Activated CD8-positive, alpha-beta memory T cell treated with anti-CD3 and anti-CD28 coated beads, Interleukin-2, amount 10 ng/mL, durations not matched to agents 7 days and 5 days (primary cell): ENCODE measurements at regions of chr12 and their contacts with region 1.

Region 1: DNA sequence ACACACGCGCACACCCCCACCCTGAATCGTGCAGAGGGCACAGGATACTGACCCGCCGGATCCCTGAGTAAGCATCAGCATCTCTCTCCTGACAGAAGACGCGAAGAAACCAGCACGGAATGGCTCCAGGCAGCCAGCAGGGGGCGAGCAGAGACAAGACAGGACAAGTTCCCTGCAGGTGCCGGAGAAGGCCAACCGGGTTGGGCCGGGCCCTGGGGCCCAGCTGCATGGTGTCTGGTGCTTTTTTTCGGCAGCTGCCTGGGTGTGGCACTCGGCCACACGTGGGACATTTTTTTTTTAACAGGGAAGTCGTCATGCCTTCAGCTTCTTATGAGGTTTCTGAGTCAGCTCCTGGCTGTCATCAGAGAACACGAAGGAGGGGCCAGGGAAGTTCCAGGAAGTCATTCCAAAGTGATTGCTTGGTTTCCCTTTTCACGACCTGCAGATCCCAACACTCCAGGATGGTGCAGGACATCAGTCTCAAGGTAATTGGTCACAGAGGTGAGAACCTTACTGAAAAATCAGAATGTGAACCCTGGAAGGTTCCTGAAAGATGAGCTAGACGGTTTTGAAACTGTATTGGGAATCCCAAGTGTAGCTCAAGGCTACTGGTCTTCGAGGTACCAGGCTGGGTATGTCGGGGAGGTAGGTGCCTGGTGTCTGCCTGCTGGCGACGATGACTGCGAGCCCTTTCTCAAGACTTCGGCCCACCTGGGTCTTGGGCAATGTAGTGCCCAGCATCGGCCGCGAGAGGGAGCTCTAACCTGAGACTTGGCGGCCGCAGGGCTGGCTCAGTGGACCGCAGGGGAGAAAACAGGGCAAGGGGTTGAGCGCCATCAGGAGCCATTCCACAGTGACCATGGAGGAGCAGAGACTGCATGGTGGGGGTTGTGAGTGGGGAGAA is 190.8 kb upstream of the PRMT8 start:
- DNase-seq: peak; percentile 88
- ATAC-seq: peak; percentile 84
- H3K4me3 Mint-ChIP-seq: no peak overlapping the region
- H3K27ac Mint-ChIP-seq: peak overlapping the region; percentile 81
- H3K4me1 Mint-ChIP-seq: peaks cover 14% of the 10 kb centered on the region
- H3K27me3 Mint-ChIP-seq: peaks cover 10% of the 10 kb centered on the region

Region 2: GRCh38 chr12:3150931-3151835 is 149.0 kb before region 1 on chr12:
- CTCF ChIA-PET with region 1: no interaction called
- DNase-seq: no peak
- ATAC-seq: no peak
- H3K4me3 Mint-ChIP-seq: no peak overlapping the region
- H3K27ac Mint-ChIP-seq: no peak overlapping the region
- H3K4me1 Mint-ChIP-seq: peaks cover 4% of the 10 kb centered on the region
- H3K27me3 Mint-ChIP-seq: peaks cover 38% of the 10 kb centered on the region

Region 3: DNA sequence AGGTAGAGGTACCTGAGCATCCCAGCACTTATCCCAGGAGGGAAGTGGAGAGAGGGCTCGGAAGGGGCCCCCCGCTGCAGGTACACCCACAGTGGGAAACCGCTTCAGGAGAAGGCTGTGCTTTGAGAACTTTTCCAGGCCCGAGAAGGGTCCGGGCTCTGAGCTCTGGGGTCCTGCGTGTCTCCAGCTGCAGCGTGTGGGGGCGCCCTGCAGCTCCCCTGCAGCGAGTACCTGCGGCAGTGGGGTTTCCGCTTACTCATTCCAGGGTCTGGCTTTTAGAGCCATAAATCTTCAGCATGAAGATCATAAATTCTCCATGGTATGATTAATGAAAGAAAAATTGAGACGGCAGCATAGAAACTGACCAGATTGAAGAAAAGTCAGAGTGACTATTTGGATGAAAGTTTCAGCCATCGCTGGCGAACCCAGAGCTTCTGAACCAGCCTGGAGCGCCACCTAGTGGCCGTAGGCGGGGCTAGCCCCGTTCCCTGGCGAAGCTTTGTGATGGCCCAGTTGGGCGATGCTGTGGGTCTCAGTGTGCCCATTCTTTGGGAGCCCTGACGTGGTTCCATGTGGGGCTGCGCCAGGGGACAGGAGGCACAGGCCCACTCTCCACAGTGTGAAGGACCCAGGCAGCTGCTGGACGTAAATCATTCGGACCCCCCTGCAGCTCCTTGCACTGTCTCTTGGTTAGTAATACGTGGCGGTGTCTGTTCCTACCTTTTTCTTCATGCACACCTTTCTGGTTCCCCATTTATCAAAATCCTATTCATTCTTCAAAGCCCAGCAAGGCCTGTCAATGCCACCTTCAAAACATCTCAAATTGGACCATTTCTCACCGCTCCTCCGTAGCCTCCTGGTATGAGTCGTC is 24.8 kb before region 1 on chr12:
- CTCF ChIA-PET with region 1: interaction called, 28 read pairs
- DNase-seq: peak; percentile 74
- ATAC-seq: peak; percentile 87
- H3K4me3 Mint-ChIP-seq: no peak overlapping the region
- H3K27ac Mint-ChIP-seq: no peak overlapping the region
- H3K4me1 Mint-ChIP-seq: no peaks in the 10 kb centered on the region
- H3K27me3 Mint-ChIP-seq: peaks cover 18% of the 10 kb centered on the region

Region 4: DNA sequence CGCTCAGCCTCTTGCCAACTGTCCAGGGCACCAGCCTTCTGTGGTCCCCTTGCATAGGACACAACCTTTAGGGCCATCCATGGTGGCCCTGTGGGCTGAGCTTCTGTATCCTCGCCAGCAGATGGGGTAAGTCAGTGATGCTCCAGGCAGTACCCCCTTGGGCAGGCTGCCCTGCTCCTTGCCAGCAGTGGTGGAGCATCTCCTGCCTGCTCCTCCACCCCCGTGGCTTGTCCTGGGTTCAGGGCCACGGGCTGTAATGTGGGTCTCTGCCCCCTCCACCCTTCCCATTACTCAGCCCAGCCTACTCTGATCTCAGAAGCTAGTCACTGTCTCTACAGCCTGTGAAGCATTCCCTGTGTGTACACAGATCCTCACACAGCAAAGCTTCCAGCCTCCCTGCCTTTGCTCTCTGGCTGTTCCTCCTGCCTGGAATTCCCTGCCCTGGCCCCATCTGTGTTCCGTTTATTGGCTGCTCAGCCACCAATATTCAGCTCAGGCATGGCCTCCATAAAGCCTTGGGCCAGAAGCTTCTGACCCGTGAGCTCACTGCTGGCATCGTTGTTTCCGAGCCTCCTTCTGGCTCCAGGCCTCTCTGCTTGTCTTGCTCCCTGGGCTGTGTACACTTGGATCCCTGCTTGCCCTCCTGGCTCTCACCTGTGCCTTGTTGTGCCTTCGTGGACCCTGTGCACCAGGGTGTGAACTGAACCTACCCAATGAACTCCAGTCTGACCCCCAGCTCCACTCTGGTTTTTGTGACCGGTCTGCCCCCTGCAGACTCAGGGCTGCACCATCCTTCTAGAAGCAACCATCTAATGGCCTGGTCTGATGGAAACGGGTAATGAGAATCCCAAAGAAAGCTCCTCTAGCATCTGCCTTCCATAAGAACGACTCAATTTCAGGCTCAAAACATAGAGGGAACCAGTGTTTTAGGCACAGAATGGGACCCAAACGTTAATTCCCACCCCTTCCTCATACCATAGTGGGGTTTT is 13.8 kb after region 1 on chr12:
- CTCF ChIA-PET with region 1: interaction called, 74 read pairs
- DNase-seq: peak; percentile 45
- ATAC-seq: peak; percentile 76
- H3K4me3 Mint-ChIP-seq: no peak overlapping the region
- H3K27ac Mint-ChIP-seq: no peak overlapping the region
- H3K4me1 Mint-ChIP-seq: no peaks in the 10 kb centered on the region
- H3K27me3 Mint-ChIP-seq: peaks cover 8% of the 10 kb centered on the region

Region 5: DNA sequence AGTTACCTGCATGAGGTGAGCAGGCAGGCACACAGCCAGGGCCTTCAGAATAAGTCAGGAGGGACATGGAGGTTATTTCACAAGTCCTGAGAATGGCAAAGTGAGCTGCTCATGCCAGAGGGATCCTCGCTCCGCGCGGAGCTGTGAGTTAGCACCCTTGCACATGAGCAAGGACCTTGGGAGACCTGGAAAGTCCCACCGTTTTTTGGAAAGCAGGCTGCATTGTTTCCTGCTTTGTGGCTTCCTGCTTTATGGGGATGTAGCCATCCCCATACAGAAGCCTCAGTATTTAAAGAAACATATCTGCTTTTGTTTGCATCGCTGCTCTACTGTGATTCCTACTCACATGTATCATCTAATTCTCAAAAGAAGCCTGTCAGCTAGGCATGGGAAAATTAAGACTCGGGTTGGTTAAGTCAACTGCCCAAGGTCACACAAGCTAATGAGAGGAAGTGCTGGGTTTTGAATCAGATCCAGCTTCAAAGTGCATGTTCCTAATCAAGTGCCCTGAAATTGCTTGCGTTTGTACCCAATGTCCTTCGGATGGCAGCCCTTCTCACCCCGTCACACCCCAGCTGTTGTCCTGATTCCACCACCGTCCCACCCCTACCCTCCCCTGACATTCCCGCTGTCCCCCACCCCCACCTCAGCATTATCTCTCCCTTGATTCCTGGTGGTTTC is 346.5 kb after region 1 on chr12:
- CTCF ChIA-PET with region 1: interaction called, 11 read pairs
- DNase-seq: no peak
- ATAC-seq: no peak
- H3K4me3 Mint-ChIP-seq: no peak overlapping the region
- H3K27ac Mint-ChIP-seq: peak overlapping the region; percentile 47
- H3K4me1 Mint-ChIP-seq: peaks cover 19% of the 10 kb centered on the region
- H3K27me3 Mint-ChIP-seq: no peaks in the 10 kb centered on the region

Region 6: DNA sequence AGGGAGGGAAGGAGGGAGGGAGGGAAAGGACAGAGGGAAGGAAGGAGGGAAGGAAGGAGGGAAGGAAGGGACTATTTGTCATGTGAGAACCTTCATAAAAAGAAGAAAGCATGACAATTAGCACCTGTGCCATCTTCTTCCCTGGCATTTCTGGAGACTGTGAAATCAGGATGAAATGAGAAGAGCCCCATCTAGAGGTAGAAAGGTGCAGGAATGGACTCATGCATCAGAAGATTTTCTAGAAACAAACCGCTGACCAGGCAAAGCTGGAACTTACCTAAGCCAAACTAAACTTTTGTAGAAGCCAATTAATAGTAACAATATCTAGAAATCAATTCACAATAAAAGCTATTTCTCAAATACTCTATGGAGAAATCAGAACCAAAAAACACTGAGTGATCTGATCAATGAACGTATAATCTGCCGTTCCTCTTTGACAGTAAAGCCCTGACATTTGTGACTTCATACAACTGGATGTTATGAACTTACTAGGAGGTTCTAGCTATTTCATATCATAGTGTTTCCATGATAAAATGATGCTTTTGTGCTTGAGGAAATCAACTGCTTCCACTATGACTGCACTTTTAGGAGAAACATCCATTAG is 477.1 kb after region 1 on chr12:
- CTCF ChIA-PET with region 1: interaction called, 32 read pairs
- DNase-seq: no peak
- ATAC-seq: no peak
- H3K4me3 Mint-ChIP-seq: no peak overlapping the region
- H3K27ac Mint-ChIP-seq: no peak overlapping the region
- H3K4me1 Mint-ChIP-seq: peaks cover 4% of the 10 kb centered on the region
- H3K27me3 Mint-ChIP-seq: no peaks in the 10 kb centered on the region

Region 7: GRCh38 chr12:3803865-3804472 is 503.8 kb after region 1 on chr12:
- CTCF ChIA-PET with region 1: interaction called, 114 read pairs
- DNase-seq: peak; percentile 85
- ATAC-seq: peak; percentile 83
- H3K4me3 Mint-ChIP-seq: no peak overlapping the region
- H3K27ac Mint-ChIP-seq: no peak overlapping the region
- H3K4me1 Mint-ChIP-seq: peaks cover 4% of the 10 kb centered on the region
- H3K27me3 Mint-ChIP-seq: no peaks in the 10 kb centered on the region